ENCODE measurements at regions of chr20 and their contacts with region 1.

Region 1: DNA sequence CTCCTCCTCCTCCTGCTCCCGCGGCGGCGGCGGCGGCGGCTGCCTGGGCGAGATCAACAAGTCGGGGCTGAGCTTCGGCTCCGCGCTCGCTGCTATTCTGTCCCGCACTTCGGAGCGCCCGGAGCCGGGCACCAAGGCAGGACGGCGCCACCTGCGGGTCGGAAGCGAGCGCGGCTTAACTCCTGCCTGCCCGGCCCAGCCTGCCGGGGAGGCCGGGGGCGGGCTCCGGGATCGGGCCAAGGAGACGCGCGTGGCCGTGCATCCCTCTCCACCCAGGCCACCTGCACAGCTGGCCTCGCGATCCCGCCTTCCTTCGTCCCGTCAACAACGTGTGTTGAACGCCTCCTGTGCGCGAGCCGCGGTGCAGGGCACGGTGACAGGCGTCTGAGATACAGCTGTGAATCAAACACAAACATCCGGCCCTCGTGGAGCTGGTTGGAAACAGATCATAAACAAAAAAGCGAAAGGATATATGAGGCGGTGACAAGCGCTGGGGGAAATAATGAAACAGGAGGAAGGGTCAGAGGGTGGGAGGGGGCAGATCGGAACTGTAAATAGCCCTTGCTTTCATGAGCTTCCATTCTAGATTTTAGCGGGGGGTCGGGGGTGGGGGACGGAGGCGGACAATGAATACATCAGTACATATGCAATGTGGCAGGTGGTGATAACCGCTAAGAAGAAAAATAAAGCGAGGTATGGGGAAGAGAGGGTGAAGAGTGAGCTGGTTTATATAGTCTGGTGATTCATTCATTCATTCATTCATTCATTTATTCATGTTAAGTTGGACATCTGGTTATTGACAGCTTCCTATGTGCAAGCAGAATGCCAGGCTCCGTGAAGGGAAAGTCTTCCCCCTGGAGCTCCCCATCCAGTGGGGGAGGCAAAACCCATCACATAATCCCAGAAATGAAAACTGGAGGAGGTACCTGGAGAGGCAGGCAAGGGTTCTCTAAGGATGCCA is 2.0 kb upstream of the KCNB1 start:
- DNase-seq: peak; percentile 70 to 75
- H3K4me3 ChIP-seq: peak overlapping the region in 1 of 3 donors; percentile 19
- H3K27ac ChIP-seq: no peak overlapping the region
- H3K4me1 ChIP-seq: peaks cover 13 to 22% of the 10 kb centered on the region in 2 donors
- H3K27me3 ChIP-seq: peaks cover 8% of the 10 kb centered on the region
- CTCF ChIP-seq: peak; percentile 17 to 70 (median 64)
- POLR2A ChIP-seq: peak in 1 of 2 donors; percentile 15

Region 2: GRCh38 chr20:49245921-49246740 is 238.3 kb before region 1 on chr20:
- intact Hi-C with region 1: loop called (anchors 10 kb)
- DNase-seq: peak; percentile 21 to 39
- H3K4me3 ChIP-seq: no peak overlapping the region
- H3K27ac ChIP-seq: no peak overlapping the region
- H3K4me1 ChIP-seq: no peaks in the 10 kb centered on the region
- H3K27me3 ChIP-seq: no peaks in the 10 kb centered on the region
- CTCF ChIP-seq: peak in 5 of 6 experiments; percentile 49 to 70 (median 64)
- POLR2A ChIP-seq: no peak

Region 3: DNA sequence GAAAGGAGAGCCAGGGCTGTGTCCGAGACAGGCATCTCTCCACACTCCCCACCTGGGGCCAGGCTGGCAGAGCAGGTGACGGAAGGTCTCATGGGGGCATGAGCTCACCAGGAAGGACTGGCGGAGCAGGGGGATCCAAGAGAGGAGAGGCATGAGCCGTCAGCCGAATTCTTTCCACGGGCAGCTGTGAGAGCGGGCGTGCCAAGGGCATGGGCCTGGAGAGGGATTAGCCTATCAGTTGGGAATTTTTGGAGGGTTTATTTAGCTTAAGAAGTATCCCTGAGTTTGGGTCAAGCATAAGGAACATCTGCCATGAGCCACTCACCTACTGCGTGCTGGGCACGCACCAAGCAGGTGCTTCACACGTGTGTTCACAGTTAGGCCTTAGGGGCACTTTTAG is 146.4 kb before region 1 on chr20:
- intact Hi-C with region 1: loop called (anchors 2 kb)
- DNase-seq: no peak
- H3K4me3 ChIP-seq: no peak overlapping the region
- H3K27ac ChIP-seq: no peak overlapping the region
- H3K4me1 ChIP-seq: no peaks in the 10 kb centered on the region
- H3K27me3 ChIP-seq: no peaks in the 10 kb centered on the region
- CTCF ChIP-seq: no peak
- POLR2A ChIP-seq: no peak

Region 4: DNA sequence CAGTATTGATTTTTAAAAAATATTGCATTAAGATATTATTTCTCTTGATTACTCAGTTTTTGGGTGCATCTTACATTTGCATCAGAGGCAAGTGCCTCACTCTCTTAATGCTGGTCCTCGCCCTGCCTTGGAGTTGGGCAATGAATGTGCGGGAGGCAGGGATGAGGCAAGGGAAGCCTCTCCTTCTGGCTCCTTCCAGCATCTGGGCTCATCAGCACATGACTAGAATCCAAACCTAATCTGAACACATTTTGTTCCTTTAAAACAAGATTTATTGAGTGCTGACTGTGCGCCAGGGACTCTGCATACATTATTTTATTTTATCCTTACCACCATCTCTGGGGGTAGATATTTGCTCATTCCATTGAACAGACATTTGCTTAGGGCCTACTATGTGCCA is 134.8 kb before region 1 on chr20:
- intact Hi-C with region 1: no loop called
- DNase-seq: no peak
- H3K4me3 ChIP-seq: no peak overlapping the region
- H3K27ac ChIP-seq: no peak overlapping the region
- H3K4me1 ChIP-seq: peaks cover 0 to 9% of the 10 kb centered on the region in 2 donors
- H3K27me3 ChIP-seq: no peaks in the 10 kb centered on the region
- CTCF ChIP-seq: no peak
- POLR2A ChIP-seq: no peak

Measured in thyroid gland (tissue), 4 donors.